Activated T-helper 1 cell treated with anti-CD3 and anti-CD28 coated beads, Interleukin-12 subunit alpha, Interleukin-12 subunit beta, Interleukin-2, Interleukin-4 antibody, amounts not matched to agents 30 ng/mL and 10 ng/mL and 1 ng/mL, durations not matched to agents 14 hours and 24 hours and 36 hours (primary cell): ENCODE measurements at regions of chr10 and their contacts with region 1.

Region 1: GRCh38 chr10:119596537-119597404 is at the start of gene TIAL1:
- DNase-seq: peak; percentile 92
- H3K4me3 Mint-ChIP-seq: peak within 1 kb of the TSS; percentile 91
- H3K27ac Mint-ChIP-seq: peak within 1 kb of the TSS; percentile 98
- H3K4me1 Mint-ChIP-seq: peaks cover 51% of the 10 kb centered on the region
- H3K27me3 Mint-ChIP-seq: no peaks in the 10 kb centered on the region
- total RNA-seq, gene TIAL1: 192 and 195 TPM in 2 replicates

Region 2: GRCh38 chr10:119315128-119316001 is 281.4 kb before region 1 on chr10:
- intact Hi-C with region 1: loop called (anchors 2 kb)
- DNase-seq: peak; percentile 64
- H3K4me3 Mint-ChIP-seq: peak overlapping the region; percentile 62
- H3K27ac Mint-ChIP-seq: peak overlapping the region; percentile 95
- H3K4me1 Mint-ChIP-seq: peaks cover 64% of the 10 kb centered on the region
- H3K27me3 Mint-ChIP-seq: peaks cover 12% of the 10 kb centered on the region

Region 3: GRCh38 chr10:119575506-119575905 is 21.3 kb before region 1 on chr10:
- intact Hi-C with region 1: loop called (anchors 2 kb)
- DNase-seq: peak; percentile 20
- H3K4me3 Mint-ChIP-seq: peak overlapping the region; percentile 40
- H3K27ac Mint-ChIP-seq: peak overlapping the region; percentile 78
- H3K4me1 Mint-ChIP-seq: peaks cover 28% of the 10 kb centered on the region
- H3K27me3 Mint-ChIP-seq: no peaks in the 10 kb centered on the region

Region 4: DNA sequence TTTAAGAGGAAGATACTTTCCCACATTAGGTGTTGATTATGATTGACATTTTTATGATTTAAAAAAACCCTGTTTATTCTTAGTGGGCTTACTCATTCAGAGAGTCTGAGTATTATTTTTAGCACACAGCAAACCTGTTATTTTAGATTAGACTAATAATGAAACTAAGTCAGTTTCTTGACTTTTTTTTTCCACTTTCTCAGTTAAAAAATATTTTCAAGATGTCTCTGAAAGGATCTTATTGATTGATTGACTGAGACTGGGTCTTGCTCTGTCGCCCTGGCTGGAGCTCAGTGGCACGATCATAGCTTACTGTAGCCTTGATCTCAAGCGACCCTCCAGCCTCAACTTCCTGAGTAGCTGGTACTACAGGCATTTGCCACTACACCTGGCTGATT is 108.7 kb after region 1 on chr10:
- intact Hi-C with region 1: loop called (anchors 1 kb)
- DNase-seq: no peak
- H3K4me3 Mint-ChIP-seq: peak overlapping the region; percentile 74
- H3K27ac Mint-ChIP-seq: peak overlapping the region; percentile 99
- H3K4me1 Mint-ChIP-seq: peaks cover 82% of the 10 kb centered on the region
- H3K27me3 Mint-ChIP-seq: peaks cover 2% of the 10 kb centered on the region

Region 5: GRCh38 chr10:119872860-119873681 is 276.3 kb after region 1 on chr10:
- intact Hi-C with region 1: loop called (anchors 1 kb)
- DNase-seq: peak; percentile 87
- H3K4me3 Mint-ChIP-seq: peak overlapping the region; percentile 84
- H3K27ac Mint-ChIP-seq: peak overlapping the region; percentile 80
- H3K4me1 Mint-ChIP-seq: peaks cover 34% of the 10 kb centered on the region
- H3K27me3 Mint-ChIP-seq: no peaks in the 10 kb centered on the region